CD4-positive, alpha-beta T cell (primary cell): ENCODE measurements at regions of chr10 and their contacts with region 1.

Region 1: GRCh38 chr10:46284293-46285229 is 2.2 kb upstream of the ANTXRL start:
- DNase-seq: peak; percentile 37 to 88 (median 73)
- ATAC-seq: peak; percentile 68
- H3K4me3 ChIP-seq: peak overlapping the region; percentile 57
- H3K4me3 Mint-ChIP-seq: peak overlapping the region; percentile 85
- H3K27ac ChIP-seq: peak overlapping the region in 1 of 2 donors; percentile 35
- H3K27ac Mint-ChIP-seq: peak overlapping the region; percentile 57
- H3K4me1 ChIP-seq: peaks cover 27% of the 10 kb centered on the region
- H3K4me1 Mint-ChIP-seq: peaks cover 25% of the 10 kb centered on the region
- H3K27me3 ChIP-seq: no peaks in the 10 kb centered on the region
- H3K27me3 Mint-ChIP-seq: no peaks in the 10 kb centered on the region
- CTCF ChIP-seq: no peak

Region 2: GRCh38 chr10:45023426-45023825 is 1261.1 kb before region 1 on chr10:
- CTCF ChIA-PET with region 1: no interaction called
- POLR2A ChIA-PET with region 1: no interaction called
- intact Hi-C with region 1: no loop called
- DNase-seq: no peak
- ATAC-seq: no peak
- H3K4me3 ChIP-seq: no peak overlapping the region
- H3K4me3 Mint-ChIP-seq: no peak overlapping the region
- H3K27ac ChIP-seq: no peak overlapping the region
- H3K27ac Mint-ChIP-seq: no peak overlapping the region
- H3K4me1 ChIP-seq: no peaks in the 10 kb centered on the region
- H3K4me1 Mint-ChIP-seq: no peaks in the 10 kb centered on the region
- H3K27me3 ChIP-seq: no peaks in the 10 kb centered on the region
- H3K27me3 Mint-ChIP-seq: no peaks in the 10 kb centered on the region
- CTCF ChIP-seq: no peak

Region 3: DNA sequence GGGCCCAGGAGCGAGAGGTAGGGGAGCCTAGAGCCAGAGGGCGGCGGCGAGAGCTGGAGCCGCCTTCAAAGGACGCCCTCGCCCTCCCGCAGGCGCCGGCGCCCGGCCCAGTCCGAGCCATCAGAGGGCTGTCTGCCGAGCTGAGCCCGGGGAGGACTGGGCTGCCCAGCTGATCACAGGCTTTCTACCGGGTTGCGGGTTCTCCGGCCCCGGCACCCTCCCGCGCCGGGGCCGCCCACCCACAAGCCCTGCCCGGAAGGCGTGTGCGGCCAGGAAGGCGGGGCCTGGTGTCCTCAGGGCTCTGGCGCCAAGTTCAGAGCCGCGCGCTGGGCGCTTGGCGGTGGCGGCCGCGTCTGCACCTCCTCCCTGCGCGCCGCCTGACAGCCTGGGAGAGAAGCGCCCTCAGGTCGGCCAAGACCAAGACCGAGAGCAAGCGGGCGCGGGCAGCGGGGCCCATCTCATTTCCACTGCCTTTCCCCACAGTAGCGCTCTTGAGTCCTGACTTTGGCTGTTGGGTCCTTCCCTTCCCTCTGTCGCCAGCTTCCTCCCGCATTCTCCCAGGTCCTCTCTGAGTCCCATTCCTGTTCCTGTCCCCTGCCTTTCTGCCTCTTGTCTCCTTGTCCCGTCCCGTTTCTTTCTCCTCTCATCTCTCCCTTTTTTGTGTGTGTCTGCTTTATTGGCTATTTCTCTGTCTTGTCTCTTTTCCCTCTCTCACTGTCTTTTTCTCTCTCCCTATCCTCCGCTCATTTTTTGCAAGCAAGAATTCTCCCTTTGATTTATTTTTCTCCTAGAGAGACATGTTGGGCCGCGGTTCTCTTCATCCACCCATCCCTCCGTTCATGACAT is 177.9 kb before region 1 on chr10:
- CTCF ChIA-PET with region 1: no interaction called
- POLR2A ChIA-PET with region 1: interaction called, 13 read pairs
- intact Hi-C with region 1: no loop called
- DNase-seq: peak in 9 of 14 experiments; percentile 28 to 74 (median 53)
- ATAC-seq: peak; percentile 88
- H3K4me3 ChIP-seq: peak overlapping the region; percentile 64
- H3K4me3 Mint-ChIP-seq: peak overlapping the region; percentile 89
- H3K27ac ChIP-seq: peak overlapping the region in 1 of 2 donors; percentile 41
- H3K27ac Mint-ChIP-seq: peak overlapping the region; percentile 14
- H3K4me1 ChIP-seq: peaks cover 14% of the 10 kb centered on the region
- H3K4me1 Mint-ChIP-seq: peaks cover 17% of the 10 kb centered on the region
- H3K27me3 ChIP-seq: no peaks in the 10 kb centered on the region
- H3K27me3 Mint-ChIP-seq: no peaks in the 10 kb centered on the region
- CTCF ChIP-seq: no peak

Region 4: DNA sequence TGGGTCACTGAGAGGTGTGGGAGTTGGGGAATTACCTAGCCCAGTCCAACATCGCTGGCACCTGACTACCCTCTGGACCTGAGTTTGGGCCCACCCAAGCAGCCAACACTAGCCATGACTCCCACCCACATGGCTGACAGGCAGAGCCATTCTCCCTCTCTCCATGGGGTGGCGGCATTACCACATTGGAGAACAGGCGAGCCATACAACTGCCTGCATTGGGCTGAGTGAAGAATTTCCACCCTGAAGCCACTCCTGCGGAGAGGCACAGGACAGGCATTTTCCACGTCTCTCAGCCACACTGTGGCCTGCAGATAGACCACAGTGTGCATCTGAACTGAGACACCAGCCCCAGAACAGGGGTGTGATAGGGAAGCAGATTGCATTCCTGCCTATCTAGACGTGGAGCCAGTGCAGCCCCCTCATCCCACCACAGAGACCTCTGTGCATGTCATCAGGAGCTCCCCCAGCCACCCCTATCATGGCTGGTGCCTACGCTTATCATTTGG is 55.9 kb before region 1 on chr10:
- CTCF ChIA-PET with region 1: no interaction called
- POLR2A ChIA-PET with region 1: no interaction called
- intact Hi-C with region 1: no loop called
- DNase-seq: peak; percentile 31 to 68 (median 48)
- ATAC-seq: peak; percentile 89
- H3K4me3 ChIP-seq: no peak overlapping the region
- H3K4me3 Mint-ChIP-seq: no peak overlapping the region
- H3K27ac ChIP-seq: no peak overlapping the region
- H3K27ac Mint-ChIP-seq: no peak overlapping the region
- H3K4me1 ChIP-seq: peaks cover 6% of the 10 kb centered on the region
- H3K4me1 Mint-ChIP-seq: peaks cover 41% of the 10 kb centered on the region
- H3K27me3 ChIP-seq: no peaks in the 10 kb centered on the region
- H3K27me3 Mint-ChIP-seq: no peaks in the 10 kb centered on the region
- CTCF ChIP-seq: peak; percentile 56

Region 5: GRCh38 chr10:46268076-46268881 is 16.3 kb before region 1 on chr10:
- CTCF ChIA-PET with region 1: interaction called, 4 read pairs
- POLR2A ChIA-PET with region 1: interaction called, 19 read pairs
- intact Hi-C with region 1: no loop called
- DNase-seq: peak; percentile 40 to 88 (median 59)
- ATAC-seq: peak; percentile 83
- H3K4me3 ChIP-seq: peak overlapping the region; percentile 84
- H3K4me3 Mint-ChIP-seq: no peak overlapping the region
- H3K27ac ChIP-seq: peak overlapping the region; percentile 80 to 82
- H3K27ac Mint-ChIP-seq: no peak overlapping the region
- H3K4me1 ChIP-seq: peaks cover 80% of the 10 kb centered on the region
- H3K4me1 Mint-ChIP-seq: peaks cover 52% of the 10 kb centered on the region
- H3K27me3 ChIP-seq: no peaks in the 10 kb centered on the region
- H3K27me3 Mint-ChIP-seq: no peaks in the 10 kb centered on the region
- CTCF ChIP-seq: no peak

Region 6: DNA sequence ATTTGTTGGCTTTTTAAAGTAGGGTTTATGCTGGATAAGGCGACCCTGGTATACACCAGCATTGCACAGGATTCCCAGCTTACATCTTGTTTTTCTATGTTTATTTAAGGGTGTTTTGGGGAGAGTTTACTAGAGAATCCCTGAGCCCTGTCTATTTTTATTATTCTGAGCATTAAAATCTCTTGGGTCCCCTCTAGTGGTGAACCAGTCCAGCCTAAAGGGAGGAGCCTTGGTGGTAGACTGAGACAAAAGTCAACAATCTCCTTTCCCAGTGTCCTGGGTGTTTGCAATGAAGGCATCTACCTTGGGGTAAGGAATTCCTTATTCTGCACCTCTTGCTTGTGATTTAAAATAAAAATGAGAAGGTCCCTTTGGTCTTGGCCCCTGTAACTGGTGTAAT is 40.5 kb after region 1 on chr10:
- CTCF ChIA-PET with region 1: no interaction called
- POLR2A ChIA-PET with region 1: no interaction called
- intact Hi-C with region 1: no loop called
- DNase-seq: peak in 2 of 14 experiments; percentile 24 to 27
- ATAC-seq: no peak
- H3K4me3 ChIP-seq: no peak overlapping the region
- H3K4me3 Mint-ChIP-seq: no peak overlapping the region
- H3K27ac ChIP-seq: no peak overlapping the region
- H3K27ac Mint-ChIP-seq: no peak overlapping the region
- H3K4me1 ChIP-seq: no peaks in the 10 kb centered on the region
- H3K4me1 Mint-ChIP-seq: no peaks in the 10 kb centered on the region
- H3K27me3 ChIP-seq: no peaks in the 10 kb centered on the region
- H3K27me3 Mint-ChIP-seq: no peaks in the 10 kb centered on the region
- CTCF ChIP-seq: peak; percentile 48